AG04449 (cell line): ENCODE measurements at regions of chr19 and their contacts with region 1.

Region 1: GRCh38 chr19:47391510-47392223 is 27.7 kb downstream of the MEIS3 start:
- DNase-seq: no peak
- H3K4me3 ChIP-seq: no peak overlapping the region
- CTCF ChIP-seq: peak; percentile 86

Region 2: DNA sequence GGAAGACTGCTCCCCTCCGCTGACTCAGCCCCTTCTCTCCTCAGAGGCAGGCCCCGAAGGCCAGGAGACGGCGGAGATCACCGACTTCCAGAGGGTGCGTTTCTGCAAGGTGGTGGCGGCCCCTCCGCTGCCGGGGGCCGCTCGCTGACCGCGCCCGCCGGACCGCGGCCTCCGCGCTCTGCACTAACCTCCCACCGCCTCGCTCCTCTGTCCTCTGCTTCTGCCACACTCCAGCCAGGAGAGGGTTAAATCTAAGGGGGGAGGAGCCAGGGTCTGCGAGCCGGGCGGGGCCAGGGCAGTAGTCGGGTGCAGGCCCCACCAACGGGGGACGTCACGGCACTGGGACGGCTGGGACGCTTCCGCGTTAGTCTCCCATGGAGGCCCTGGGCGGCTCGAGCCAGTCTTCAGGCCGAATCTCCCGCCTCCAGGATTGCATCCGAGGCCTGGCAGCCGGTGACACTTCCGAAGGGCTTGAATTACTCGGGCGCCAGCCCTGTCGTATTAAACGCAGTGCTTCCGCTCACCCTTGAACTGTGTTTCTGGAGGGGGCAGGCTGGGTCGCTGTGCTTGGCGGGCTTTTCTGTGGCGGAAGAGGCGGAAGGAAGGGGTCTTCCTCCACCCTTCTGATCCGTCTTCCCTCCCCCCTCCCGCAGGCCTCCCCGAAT is 118.2 kb before region 1 on chr19:
- CTCF ChIA-PET with region 1: interaction called, 11 read pairs
- POLR2A ChIA-PET with region 1: no interaction called
- DNase-seq: peak; percentile 46
- H3K4me3 ChIP-seq: peak overlapping the region; percentile 66
- CTCF ChIP-seq: no peak

Region 3: DNA sequence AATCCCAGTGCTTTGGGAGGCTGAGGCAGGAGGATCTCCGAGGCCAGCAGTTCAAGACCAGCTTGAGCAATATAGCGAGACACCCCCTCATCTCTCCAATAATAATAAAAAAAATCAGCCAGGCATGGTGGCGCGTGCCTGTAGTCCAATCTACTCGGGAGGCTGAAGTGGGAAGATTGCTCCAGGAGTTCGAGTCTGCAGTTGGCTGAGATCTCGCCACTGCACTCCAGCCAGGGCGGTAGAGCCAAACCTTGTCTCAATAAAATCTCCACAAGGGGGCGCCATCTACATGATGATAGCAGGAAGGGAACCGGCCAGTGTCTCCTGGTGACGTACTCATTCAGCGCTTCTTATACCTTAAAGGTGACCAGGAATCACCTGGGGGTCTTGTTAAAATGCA is 95.6 kb before region 1 on chr19:
- CTCF ChIA-PET with region 1: interaction called, 284 read pairs
- POLR2A ChIA-PET with region 1: no interaction called
- DNase-seq: no peak
- H3K4me3 ChIP-seq: no peak overlapping the region
- CTCF ChIP-seq: peak; percentile 66

Region 4: GRCh38 chr19:47305309-47305751 is 86.3 kb before region 1 on chr19:
- CTCF ChIA-PET with region 1: interaction called, 284 read pairs
- POLR2A ChIA-PET with region 1: no interaction called
- DNase-seq: peak; percentile 41
- H3K4me3 ChIP-seq: peak overlapping the region; percentile 16; the same call in 1 of the 2 replicates
- CTCF ChIP-seq: peak; percentile 92

Region 5: DNA sequence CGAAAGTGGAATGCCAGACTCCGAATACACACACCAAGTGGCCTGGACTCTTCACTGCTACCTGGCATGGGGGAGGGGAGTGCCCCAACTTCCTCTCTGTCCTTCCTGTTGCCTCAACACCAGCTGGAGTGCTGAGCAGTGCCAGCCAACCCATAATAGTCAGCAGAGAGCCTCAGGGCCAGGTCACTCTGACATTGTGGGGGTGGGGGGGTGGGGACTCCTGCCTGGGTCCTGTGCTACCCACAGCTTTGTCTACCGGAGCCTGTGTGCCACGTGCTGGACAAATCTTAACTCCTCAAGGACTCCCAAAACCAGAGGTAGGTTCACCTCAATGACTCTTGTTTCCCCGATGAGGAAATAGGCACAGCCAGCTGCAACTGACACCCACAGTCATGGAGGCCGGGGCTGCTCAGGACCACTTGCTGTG is 54.8 kb before region 1 on chr19:
- CTCF ChIA-PET with region 1: interaction called, 20 read pairs
- POLR2A ChIA-PET with region 1: no interaction called
- DNase-seq: no peak
- H3K4me3 ChIP-seq: no peak overlapping the region
- CTCF ChIP-seq: no peak

Region 6: DNA sequence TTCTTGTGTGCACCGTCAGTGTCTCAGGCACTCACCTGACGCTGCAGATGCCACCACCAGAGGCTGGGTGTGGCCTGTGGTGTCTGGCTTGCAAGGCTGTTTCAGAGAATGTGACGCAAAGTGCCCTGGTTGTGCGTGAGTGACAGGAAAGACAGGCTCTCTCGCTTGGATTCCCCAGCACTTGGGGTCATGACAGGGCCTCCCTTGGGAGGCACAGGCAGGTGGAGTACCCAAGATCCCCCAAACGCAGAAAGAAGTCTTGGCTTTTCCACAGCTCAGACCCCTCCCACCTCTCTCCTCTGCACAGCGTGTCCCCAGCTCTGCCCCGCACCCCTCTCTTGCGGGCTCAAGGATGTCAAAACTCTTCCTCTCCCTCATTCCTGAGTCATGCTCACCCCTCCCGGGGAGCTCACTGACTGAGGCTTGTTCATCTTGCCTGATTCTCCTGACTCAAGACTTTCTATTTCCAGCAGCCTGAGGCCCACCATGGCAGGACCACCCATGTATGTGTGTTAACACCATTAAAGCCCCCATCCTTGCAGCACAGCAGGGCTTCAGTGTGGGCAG is 21.5 kb before region 1 on chr19:
- CTCF ChIA-PET with region 1: interaction called, 18 read pairs
- POLR2A ChIA-PET with region 1: no interaction called
- DNase-seq: peak; percentile 16
- H3K4me3 ChIP-seq: no peak overlapping the region
- CTCF ChIP-seq: no peak

Region 7: DNA sequence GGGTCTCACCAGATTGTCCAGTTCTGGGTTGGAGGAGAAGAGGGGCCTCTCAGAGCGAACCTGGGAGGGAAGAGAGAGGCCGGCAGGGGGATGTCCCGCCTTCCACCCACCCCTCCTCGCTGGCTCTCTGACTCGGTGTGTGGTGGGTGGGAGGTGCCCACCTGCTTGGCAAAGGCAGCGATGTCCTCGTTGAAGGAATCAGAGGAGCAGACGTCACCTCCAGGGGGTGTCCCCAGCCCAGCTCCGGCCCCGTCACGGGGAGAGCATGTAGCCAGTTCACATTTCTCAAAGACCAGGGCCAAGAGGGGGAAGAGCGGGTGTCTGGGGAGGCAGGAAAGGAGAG is 24.9 kb after region 1 on chr19:
- CTCF ChIA-PET with region 1: interaction called, 11 read pairs
- POLR2A ChIA-PET with region 1: no interaction called
- DNase-seq: no peak
- H3K4me3 ChIP-seq: no peak overlapping the region
- CTCF ChIP-seq: no peak